ENCODE measurements at regions of chr11 and their contacts with region 1.

Region 1: DNA sequence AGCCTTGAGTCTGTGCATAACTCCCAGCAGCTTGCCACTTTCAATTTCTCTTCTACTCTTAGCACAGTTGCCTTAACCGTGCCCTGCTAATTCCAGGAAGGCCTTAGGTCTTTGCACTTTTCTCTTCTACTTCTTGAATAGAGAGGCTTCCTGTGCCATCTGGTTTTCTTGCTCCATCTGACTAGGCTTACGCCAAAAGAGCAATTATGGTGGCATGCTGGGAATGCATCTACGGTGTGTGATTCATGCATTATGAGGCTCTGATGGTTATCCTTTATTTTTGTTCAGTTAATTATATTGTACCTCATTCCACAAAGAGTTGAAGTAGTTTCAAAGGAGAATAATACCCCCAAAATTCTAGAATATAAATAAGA is 29.4 kb downstream of the SIK2 start:
- DNase-seq: no peak
- H3K4me3 ChIP-seq: no peak overlapping the region
- H3K4me3 Mint-ChIP-seq: no peak overlapping the region
- H3K27ac Mint-ChIP-seq: no peak overlapping the region
- H3K4me1 ChIP-seq: peaks cover 42% of the 10 kb centered on the region
- H3K4me1 Mint-ChIP-seq: peaks cover 45% of the 10 kb centered on the region
- H3K27me3 ChIP-seq: no peaks in the 10 kb centered on the region
- H3K27me3 Mint-ChIP-seq: no peaks in the 10 kb centered on the region
- CTCF ChIP-seq: no peak

Region 2: DNA sequence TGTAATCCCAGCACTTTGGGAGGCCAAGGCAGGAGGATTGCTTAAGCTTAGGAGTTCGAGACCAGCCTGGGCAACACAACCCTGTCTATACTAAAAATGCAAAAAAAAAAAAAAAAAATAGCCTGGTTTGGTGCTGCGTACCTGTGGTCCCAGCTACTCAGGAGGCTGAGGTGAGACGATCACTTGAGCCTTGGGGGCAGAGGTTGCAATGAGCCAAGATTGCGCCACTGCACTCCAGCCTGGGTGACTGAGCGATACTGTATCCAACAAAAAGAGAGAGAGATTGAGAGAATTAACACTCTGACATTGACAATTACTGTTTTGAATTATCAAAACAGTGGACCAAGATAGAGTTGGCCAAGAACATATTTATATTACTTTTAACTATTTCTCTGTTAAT is 24.3 kb after region 1 on chr11:
- CTCF ChIA-PET with region 1: no interaction called
- POLR2A ChIA-PET with region 1: no interaction called
- intact Hi-C with region 1: loop called (anchors 1 kb)
- DNase-seq: no peak
- H3K4me3 ChIP-seq: no peak overlapping the region
- H3K4me3 Mint-ChIP-seq: no peak overlapping the region
- H3K27ac Mint-ChIP-seq: no peak overlapping the region
- H3K4me1 ChIP-seq: no peaks in the 10 kb centered on the region
- H3K4me1 Mint-ChIP-seq: peaks cover 20% of the 10 kb centered on the region
- H3K27me3 ChIP-seq: no peaks in the 10 kb centered on the region
- H3K27me3 Mint-ChIP-seq: no peaks in the 10 kb centered on the region
- CTCF ChIP-seq: no peak

Region 3: DNA sequence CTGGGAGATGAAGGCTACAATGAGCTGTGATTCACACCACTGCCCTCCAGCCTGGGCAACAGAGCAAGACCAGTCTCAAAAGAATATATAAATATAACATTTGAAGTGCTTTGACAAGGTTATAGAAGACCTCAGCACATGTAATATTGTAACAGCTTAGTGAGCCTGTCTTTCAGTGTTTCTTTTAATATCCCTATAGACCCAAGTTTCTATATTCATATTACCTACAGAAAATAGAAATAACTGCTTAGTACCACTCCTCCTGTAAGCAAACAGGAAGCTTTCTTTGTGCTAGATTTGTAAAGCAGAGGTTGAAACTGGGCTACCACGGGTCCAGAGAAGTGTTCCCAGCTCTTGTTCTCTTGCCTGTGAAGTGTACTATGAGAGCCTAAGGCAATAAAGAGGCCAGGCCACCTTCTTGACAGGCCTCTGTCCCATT is 66.3 kb after region 1 on chr11:
- CTCF ChIA-PET with region 1: no interaction called
- POLR2A ChIA-PET with region 1: no interaction called
- intact Hi-C with region 1: no loop called
- DNase-seq: no peak
- H3K4me3 ChIP-seq: no peak overlapping the region
- H3K4me3 Mint-ChIP-seq: no peak overlapping the region
- H3K27ac Mint-ChIP-seq: no peak overlapping the region
- H3K4me1 ChIP-seq: 0 out of 2 replicates have a peak, but pooled peaks cover 4% of the 10 kb centered on the region
- H3K4me1 Mint-ChIP-seq: no peaks in the 10 kb centered on the region
- H3K27me3 ChIP-seq: no peaks in the 10 kb centered on the region
- H3K27me3 Mint-ChIP-seq: no peaks in the 10 kb centered on the region
- CTCF ChIP-seq: no peak